Activated B cell treated with CpG ODN at 0.5 μM for 24 hours (primary cell): ENCODE measurements at regions of chr16 and their contacts with region 1.

Region 1: DNA sequence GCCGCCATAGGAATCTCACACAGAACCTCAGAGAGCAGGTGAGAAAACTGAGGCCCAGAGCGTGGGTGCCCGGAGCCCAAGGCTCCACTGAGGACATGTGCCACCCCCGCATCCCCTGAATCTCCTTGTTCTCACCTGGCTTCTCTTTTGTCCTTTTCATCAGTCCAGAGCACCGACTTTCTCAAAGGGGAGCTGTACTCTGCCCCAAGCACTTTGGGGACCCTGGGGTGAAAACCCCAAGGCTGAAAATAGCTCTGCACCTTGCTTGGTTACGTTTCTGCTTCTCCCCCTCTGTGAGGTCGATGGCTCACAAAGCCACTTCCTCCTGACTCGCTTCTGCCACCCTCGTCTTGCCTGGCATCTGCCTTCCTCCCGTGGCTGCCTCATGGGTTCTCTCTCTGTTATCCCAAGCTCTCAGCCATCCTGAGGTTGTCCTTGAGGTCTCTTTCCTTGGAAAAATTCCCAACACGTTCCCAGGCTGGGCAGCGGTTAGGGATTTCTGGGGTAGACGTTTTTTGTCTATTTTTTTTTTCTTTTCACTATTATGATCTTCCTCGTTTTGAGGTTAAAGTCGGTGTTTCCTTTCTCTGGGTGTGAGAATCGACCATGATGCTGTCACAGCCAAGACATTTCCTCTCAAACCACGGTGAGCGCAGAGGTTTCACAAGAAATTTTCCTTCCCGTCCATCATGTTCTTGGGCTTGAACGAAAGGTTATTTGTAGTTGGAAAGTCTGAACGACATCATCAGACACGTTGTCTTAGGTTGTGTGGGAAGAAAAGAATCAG is 37.2 kb downstream of the IRF8 start:
- DNase-seq: peak; percentile 66
- ATAC-seq: peak; percentile 78
- H3K4me3 Mint-ChIP-seq: peak overlapping the region; percentile 75
- H3K27ac Mint-ChIP-seq: peak overlapping the region; percentile 98
- H3K4me1 Mint-ChIP-seq: peaks cover 90% of the 10 kb centered on the region
- H3K27me3 Mint-ChIP-seq: no peaks in the 10 kb centered on the region
- CTCF ChIP-seq: no peak

Region 2: GRCh38 chr16:85829751-85830445 is 106.3 kb before region 1 on chr16:
- CTCF ChIA-PET with region 1: no interaction called
- POLR2A ChIA-PET with region 1: interaction called, 7 read pairs
- intact Hi-C with region 1: loop called (anchors 1 kb)
- DNase-seq: no peak
- ATAC-seq: no peak
- H3K4me3 Mint-ChIP-seq: peak overlapping the region; percentile 67
- H3K27ac Mint-ChIP-seq: peak overlapping the region; percentile 88
- H3K4me1 Mint-ChIP-seq: peaks cover 57% of the 10 kb centered on the region
- H3K27me3 Mint-ChIP-seq: no peaks in the 10 kb centered on the region
- CTCF ChIP-seq: no peak

Region 3: GRCh38 chr16:85908444-85908843 is 27.7 kb before region 1 on chr16:
- CTCF ChIA-PET with region 1: interaction called, 8 read pairs
- POLR2A ChIA-PET with region 1: interaction called, 44 read pairs
- intact Hi-C with region 1: no loop called
- DNase-seq: peak; percentile 20
- ATAC-seq: peak; percentile 60
- H3K4me3 Mint-ChIP-seq: peak overlapping the region; percentile 77
- H3K27ac Mint-ChIP-seq: peak overlapping the region; percentile 97
- H3K4me1 Mint-ChIP-seq: peaks cover 99% of the 10 kb centered on the region
- H3K27me3 Mint-ChIP-seq: no peaks in the 10 kb centered on the region
- CTCF ChIP-seq: no peak

Region 4: GRCh38 chr16:85916141-85916890 is 19.9 kb before region 1 on chr16:
- CTCF ChIA-PET with region 1: interaction called, 3 read pairs
- POLR2A ChIA-PET with region 1: interaction called, 27 read pairs
- intact Hi-C with region 1: loop called (anchors 1 kb)
- DNase-seq: no peak
- ATAC-seq: no peak
- H3K4me3 Mint-ChIP-seq: peak overlapping the region; percentile 16
- H3K27ac Mint-ChIP-seq: peak overlapping the region; percentile 97
- H3K4me1 Mint-ChIP-seq: peaks cover 86% of the 10 kb centered on the region
- H3K27me3 Mint-ChIP-seq: no peaks in the 10 kb centered on the region
- CTCF ChIP-seq: no peak

Region 5: DNA sequence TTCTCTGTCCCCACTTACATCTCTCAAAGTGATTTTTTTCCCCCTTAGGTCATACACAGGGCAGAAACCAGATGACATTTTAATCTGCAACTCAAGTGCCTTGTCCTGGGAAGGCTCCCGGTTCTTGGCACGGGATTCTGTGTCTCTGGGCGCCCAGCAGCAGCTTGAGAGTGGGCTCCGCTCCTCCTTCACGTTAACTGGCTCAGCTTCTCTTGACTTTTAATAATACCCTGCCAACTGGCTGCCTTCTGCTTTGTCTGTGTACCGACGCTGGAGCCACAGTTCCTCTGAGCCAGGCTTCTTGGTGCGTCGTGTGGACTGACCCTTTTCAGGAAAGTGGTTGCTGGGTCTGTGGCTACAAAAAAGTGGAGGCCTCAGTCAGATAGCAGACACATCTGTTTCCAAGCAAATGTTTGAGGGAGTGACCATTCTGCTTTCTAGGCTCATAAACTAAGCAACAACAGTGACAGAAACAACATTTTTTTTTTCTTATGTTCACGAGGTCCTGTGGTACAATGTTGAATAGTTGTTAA is 27.7 kb after region 1 on chr16:
- CTCF ChIA-PET with region 1: interaction called, 3 read pairs
- POLR2A ChIA-PET with region 1: interaction called, 13 read pairs
- intact Hi-C with region 1: loop called (anchors 1 kb)
- DNase-seq: no peak
- ATAC-seq: no peak
- H3K4me3 Mint-ChIP-seq: no peak overlapping the region
- H3K27ac Mint-ChIP-seq: peak overlapping the region; percentile 41
- H3K4me1 Mint-ChIP-seq: peaks cover 53% of the 10 kb centered on the region
- H3K27me3 Mint-ChIP-seq: no peaks in the 10 kb centered on the region
- CTCF ChIP-seq: no peak

Region 6: DNA sequence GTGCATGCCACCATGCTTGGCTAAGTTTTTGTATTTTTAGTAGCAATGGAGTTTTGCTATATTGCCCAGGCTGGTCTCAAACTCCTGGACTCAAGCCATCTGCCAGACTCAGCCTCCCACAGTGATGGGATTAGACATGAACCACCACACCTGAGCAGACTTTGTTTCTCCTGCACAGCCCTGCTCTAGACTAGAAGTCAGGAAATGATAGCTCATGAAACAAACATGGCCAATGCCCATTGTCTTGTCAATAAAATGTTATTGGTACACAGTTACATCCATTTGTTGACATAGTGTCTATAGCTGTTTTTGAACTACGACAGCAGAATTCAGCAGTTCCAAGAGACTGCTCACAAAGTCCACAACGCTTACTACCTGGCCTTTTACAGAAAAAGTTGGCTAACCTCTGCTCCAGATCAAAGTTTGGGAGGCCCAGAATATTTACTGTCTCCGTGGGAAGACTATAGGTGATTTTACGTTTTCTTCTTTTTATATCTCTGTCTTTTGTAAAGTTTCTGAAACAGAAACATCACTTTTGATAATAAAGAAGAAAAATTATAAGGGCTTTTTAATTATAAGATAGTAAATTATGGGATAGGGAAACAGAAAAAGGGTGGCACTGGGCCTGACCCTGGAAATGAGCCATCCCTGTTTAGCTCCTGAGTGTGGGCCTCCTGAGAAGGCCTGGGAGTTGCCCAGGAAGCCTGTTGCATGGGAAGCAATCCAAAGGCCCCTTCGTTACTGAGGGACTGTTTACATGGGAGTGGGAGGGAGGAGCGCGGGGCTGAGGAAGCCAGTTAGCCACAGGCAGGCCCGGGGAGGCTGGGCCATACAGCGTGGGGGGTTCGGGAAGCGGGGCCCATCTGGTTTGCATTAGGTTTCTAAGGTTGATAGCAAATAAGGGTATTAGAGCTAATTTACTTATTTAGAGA is 164.3 kb after region 1 on chr16:
- CTCF ChIA-PET with region 1: no interaction called
- POLR2A ChIA-PET with region 1: no interaction called
- intact Hi-C with region 1: no loop called
- DNase-seq: no peak
- ATAC-seq: no peak
- H3K4me3 Mint-ChIP-seq: no peak overlapping the region
- H3K27ac Mint-ChIP-seq: no peak overlapping the region
- H3K4me1 Mint-ChIP-seq: no peaks in the 10 kb centered on the region
- H3K27me3 Mint-ChIP-seq: peaks cover 4% of the 10 kb centered on the region
- CTCF ChIP-seq: no peak